CD8-positive, alpha-beta memory T cell (primary cell): ENCODE measurements at regions of chr13 and their contacts with region 1.

Region 1: DNA sequence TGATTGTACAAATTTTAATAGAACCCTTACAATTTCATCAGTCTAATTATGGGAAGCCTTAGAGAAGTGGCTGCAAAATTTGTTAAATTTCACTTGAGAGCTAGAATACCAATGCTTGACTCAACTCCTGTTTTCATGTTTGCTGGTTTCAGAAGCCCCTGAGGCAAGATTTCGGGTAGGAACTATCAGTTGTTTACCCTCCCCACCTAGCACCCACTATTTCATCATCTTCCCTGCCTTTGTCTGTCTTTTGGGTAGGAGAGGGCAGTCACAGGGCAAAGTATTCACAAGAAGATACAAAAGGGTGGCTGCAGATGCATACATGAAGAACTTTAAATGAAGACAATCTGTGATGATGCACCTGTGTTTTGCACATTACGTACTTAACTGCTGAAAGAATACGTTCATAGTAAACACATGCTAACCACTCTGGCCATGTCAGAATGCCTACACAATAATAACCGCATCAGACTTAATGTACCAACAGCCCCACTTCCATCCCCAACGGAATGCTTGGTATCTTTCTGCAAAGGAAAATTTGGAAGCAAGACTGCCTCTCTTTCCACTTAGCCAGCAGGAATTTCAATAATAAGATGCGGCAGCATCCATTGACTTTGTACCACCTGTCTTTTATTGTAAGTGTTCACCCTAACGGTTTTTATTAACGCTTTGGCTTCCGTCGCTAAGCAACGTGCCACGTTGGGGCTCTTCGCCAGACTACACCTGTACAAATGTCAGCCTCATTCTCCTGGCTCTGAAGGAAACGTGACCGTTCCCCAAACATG is 30.4 kb downstream of the TPT1 start:
- DNase-seq: no peak
- H3K4me3 ChIP-seq: peak overlapping the region; percentile 23
- H3K4me3 Mint-ChIP-seq: peak overlapping the region; percentile 85 to 94 (median 88)
- H3K27ac ChIP-seq: no peak overlapping the region
- H3K27ac Mint-ChIP-seq: peak overlapping the region in 2 of 8 donors; percentile 18 to 79
- H3K4me1 ChIP-seq: peaks cover 13% of the 10 kb centered on the region
- H3K4me1 Mint-ChIP-seq: peaks cover 11 to 24% (median 20%) of the 10 kb centered on the region in 3 donors
- H3K27me3 ChIP-seq: no peaks in the 10 kb centered on the region
- H3K27me3 Mint-ChIP-seq: peaks cover 12 to 25% of the 10 kb centered on the region in 2 donors

Region 2: GRCh38 chr13:45297456-45298205 is 12.9 kb before region 1 on chr13:
- CTCF ChIA-PET with region 1: interaction called, 34 read pairs
- POLR2A ChIA-PET with region 1: no interaction called
- DNase-seq: peak in 2 of 5 donors; percentile 21 to 47
- H3K4me3 ChIP-seq: no peak overlapping the region
- H3K4me3 Mint-ChIP-seq: peak overlapping the region in 6 of 7 donors; percentile 16 to 78 (median 52)
- H3K27ac ChIP-seq: no peak overlapping the region
- H3K27ac Mint-ChIP-seq: peak overlapping the region; percentile 44 to 91 (median 80)
- H3K4me1 ChIP-seq: peaks cover 32% of the 10 kb centered on the region
- H3K4me1 Mint-ChIP-seq: peaks cover 37 to 55% (median 51%) of the 10 kb centered on the region in 3 donors
- H3K27me3 ChIP-seq: no peaks in the 10 kb centered on the region
- H3K27me3 Mint-ChIP-seq: peaks cover 0 to 3% of the 10 kb centered on the region in 2 donors